Endothelial cell of umbilical vein (primary cell): ENCODE measurements at regions of chr3 and their contacts with region 1.

Region 1: DNA sequence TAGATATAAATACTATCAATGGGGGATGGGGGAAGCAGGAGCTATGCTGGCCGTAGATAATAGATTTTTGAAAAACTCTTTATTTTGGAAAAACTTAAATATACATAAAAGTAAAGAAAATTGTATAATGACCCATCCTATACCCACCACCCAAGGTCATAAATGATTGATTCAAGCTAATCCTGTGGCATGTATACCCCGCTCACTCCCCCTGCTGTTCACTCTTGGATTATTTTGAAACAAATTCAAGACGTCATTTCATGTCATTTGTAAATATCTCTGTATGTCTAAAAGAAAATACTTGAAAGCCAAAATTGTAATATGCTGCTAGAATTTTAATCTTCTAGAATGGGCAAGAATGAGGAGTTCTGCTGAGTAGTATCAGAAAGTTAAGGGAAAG is 241.8 kb downstream of the FEZF2 start:
- DNase-seq: peak; percentile 47
- H3K4me3 ChIP-seq: no peak overlapping the region
- H3K27ac ChIP-seq: no peak overlapping the region
- H3K4me1 ChIP-seq: peaks cover 11% of the 10 kb centered on the region
- H3K27me3 ChIP-seq: no peaks in the 10 kb centered on the region
- CTCF ChIP-seq: peak; percentile 17 to 37
- POLR2A ChIP-seq: no peak

Region 2: DNA sequence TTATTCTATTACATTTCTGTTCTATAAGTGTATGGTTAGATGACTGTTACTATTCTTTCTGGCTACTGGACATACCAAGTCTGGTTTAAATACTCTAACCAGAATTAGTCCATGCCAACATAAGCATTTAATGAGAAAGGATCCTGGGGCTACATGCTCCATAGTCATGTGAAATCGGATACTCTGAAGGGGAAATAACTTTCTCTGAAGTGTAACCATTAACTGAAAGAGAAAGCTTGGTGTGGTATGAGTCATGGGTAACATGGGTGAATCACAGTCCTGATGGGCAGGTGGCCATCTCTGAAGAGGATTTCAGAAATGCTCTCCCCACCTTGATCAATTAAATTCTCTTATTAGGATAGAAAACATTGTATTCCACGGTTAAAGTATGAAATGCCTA is 949.7 kb before region 1 on chr3:
- CTCF ChIA-PET with region 1: no interaction called
- POLR2A ChIA-PET with region 1: no interaction called
- dilution Hi-C with region 1: no loop called
- intact Hi-C with region 1: no loop called
- DNase-seq: peak; percentile 35
- H3K4me3 ChIP-seq: no peak overlapping the region
- H3K27ac ChIP-seq: no peak overlapping the region
- H3K4me1 ChIP-seq: no peaks in the 10 kb centered on the region
- H3K27me3 ChIP-seq: no peaks in the 10 kb centered on the region
- CTCF ChIP-seq: no peak
- POLR2A ChIP-seq: no peak

Region 3: GRCh38 chr3:61858056-61858455 is 273.5 kb before region 1 on chr3:
- CTCF ChIA-PET with region 1: interaction called, 20 read pairs
- POLR2A ChIA-PET with region 1: no interaction called
- dilution Hi-C with region 1: no loop called
- intact Hi-C with region 1: loop called (anchors 1 kb)
- DNase-seq: peak; percentile 57
- H3K4me3 ChIP-seq: no peak overlapping the region
- H3K27ac ChIP-seq: no peak overlapping the region
- H3K4me1 ChIP-seq: no peaks in the 10 kb centered on the region
- H3K27me3 ChIP-seq: no peaks in the 10 kb centered on the region
- CTCF ChIP-seq: peak; percentile 6 to 34
- POLR2A ChIP-seq: no peak

Region 4: GRCh38 chr3:62039586-62039985 is 92.0 kb before region 1 on chr3:
- CTCF ChIA-PET with region 1: no interaction called
- POLR2A ChIA-PET with region 1: no interaction called
- dilution Hi-C with region 1: no loop called
- intact Hi-C with region 1: no loop called
- DNase-seq: no peak
- H3K4me3 ChIP-seq: no peak overlapping the region
- H3K27ac ChIP-seq: no peak overlapping the region
- H3K4me1 ChIP-seq: no peaks in the 10 kb centered on the region
- H3K27me3 ChIP-seq: no peaks in the 10 kb centered on the region
- CTCF ChIP-seq: no peak
- POLR2A ChIP-seq: no peak

Region 5: GRCh38 chr3:62119151-62119550 is 12.4 kb before region 1 on chr3:
- CTCF ChIA-PET with region 1: interaction called, 18 read pairs
- POLR2A ChIA-PET with region 1: no interaction called
- dilution Hi-C with region 1: no loop called
- intact Hi-C with region 1: no loop called
- DNase-seq: no peak
- H3K4me3 ChIP-seq: no peak overlapping the region
- H3K27ac ChIP-seq: no peak overlapping the region
- H3K4me1 ChIP-seq: no peaks in the 10 kb centered on the region
- H3K27me3 ChIP-seq: no peaks in the 10 kb centered on the region
- CTCF ChIP-seq: no peak
- POLR2A ChIP-seq: no peak

Region 6: DNA sequence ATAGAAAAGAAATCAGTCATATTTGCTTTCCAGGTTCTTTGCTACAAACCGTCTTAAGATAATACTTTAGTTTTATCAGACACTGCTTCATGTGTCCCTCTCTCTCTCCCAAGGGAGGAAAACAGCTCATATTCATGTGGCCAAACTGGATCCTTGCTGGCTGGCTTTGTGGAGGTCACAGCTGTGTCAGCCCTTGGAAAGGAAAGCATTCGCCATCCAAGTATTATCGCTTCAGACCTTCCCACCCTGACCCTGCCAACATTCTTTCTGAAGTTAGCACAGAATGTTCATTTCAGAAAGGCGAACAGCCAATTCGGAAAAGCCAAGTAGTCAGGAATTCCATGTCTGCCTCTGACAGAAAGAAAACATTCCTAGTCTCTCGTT is 28.1 kb after region 1 on chr3:
- CTCF ChIA-PET with region 1: interaction called, 4 read pairs
- POLR2A ChIA-PET with region 1: no interaction called
- dilution Hi-C with region 1: no loop called
- intact Hi-C with region 1: loop called (anchors 1 kb)
- DNase-seq: peak; percentile 95
- H3K4me3 ChIP-seq: peak overlapping the region in 1 of 3 experiments; percentile 26
- H3K27ac ChIP-seq: peak overlapping the region; percentile 94
- H3K4me1 ChIP-seq: peaks cover 33% of the 10 kb centered on the region
- H3K27me3 ChIP-seq: no peaks in the 10 kb centered on the region
- CTCF ChIP-seq: no peak
- POLR2A ChIP-seq: no peak

Region 7: DNA sequence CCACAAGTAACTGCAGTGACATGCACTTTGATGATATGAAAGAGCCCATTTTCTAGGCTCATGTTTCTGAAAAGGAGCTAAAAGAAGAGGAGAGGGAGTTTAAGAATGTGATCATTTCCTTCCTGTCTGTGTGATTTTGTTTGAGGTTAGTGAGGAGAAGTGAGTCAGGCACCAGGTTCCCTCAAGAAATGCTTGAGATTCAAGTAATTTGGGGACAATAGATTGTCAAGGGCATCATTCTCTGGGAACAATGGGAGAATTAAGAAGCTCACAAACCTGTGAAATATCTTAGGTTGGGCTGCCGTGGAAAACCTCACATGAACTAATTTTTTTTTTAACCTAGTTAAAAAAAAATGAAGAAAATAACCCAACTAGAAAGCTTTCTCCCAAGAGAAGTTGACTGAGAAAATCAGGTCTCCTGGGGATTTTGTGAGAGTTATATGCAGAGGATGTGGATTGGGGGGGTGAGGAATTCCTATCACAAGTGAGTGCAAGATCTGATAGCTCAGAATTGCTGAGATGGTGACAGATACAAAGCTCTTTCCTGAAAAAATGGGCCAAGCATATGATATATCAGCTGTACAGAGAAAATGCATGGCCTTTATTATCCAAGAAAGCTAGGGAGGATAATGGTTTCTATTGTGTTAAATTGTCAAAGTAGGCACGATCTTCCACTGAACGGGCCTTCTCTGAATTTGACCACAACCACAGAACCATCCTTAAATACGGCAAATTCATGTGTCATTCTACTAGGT is 38.5 kb after region 1 on chr3:
- CTCF ChIA-PET with region 1: interaction called, 7 read pairs
- POLR2A ChIA-PET with region 1: no interaction called
- dilution Hi-C with region 1: no loop called
- intact Hi-C with region 1: loop called (anchors 1 kb)
- DNase-seq: peak; percentile 74
- H3K4me3 ChIP-seq: no peak overlapping the region
- H3K27ac ChIP-seq: peak overlapping the region; percentile 95
- H3K4me1 ChIP-seq: peaks cover 21% of the 10 kb centered on the region
- H3K27me3 ChIP-seq: no peaks in the 10 kb centered on the region
- CTCF ChIP-seq: no peak
- POLR2A ChIP-seq: no peak